Posterior vena cava (tissue), 2 donors: ENCODE measurements at regions of chr5 and their contacts with region 1.

Region 1: DNA sequence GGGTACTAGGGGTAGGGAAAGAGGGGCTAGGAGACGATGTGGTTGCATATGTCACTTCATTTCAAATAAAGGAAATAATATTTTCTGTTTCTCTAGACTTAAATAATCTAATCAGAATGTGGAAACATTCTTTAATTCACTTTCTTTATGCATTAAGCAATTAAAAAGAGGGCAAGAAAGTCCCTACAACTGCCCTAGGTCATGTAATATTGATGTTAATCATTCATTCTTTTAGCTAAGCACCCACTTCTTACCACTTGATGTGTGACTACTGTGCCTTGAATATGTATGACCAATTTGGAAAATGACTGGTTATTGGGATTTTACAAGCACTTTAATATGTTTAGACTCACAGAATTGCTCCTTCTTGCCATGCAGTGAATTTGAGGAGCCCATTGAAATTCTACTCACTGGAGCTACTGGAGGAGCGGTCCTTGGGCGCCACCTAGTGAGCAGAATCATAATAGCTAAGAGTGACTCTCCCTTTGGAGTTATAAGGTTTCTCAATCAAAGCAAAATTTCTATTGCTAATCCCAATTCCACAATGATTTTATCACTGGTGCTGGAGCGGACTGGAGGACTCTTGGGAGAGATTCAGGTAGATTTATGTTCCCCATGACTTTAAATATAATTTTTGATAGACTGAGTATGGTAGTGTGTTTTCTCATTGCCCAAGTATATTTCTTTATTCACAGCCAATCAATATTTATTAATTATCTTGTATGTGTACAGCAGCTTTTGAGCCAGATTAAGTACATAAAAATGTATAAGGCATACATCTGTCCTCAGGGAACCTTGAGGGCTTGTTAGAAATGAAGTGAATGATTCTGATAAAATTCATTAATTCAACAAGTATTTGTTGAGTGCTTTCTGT is 225.1 kb downstream of the ADGRV1 start:
- DNase-seq: peak; percentile 80

Region 2: GRCh38 chr5:90446961-90447360 is 336.7 kb before region 1 on chr5:
- intact Hi-C with region 1: loop called in 1 of 2 experiments (anchors 10 kb)
- DNase-seq: no peak

Region 3: DNA sequence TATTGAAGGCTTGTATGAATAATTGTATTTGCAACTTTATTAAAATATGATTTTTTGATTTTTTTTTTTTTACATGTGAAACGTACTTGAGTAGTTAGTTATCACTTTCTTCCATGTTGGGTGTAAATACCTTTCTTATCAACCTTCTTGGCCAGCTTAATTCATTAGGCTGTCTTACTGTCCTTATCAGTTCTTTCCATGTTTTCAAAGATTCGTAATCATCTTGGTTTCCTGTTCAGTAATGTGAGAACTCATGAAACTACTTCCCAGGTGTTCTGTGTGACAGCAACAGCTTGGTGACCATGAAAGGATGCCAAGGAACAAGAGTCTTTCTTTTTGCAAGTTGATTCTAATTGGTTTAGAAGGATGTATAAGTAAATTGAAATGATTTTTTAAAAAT is 125.1 kb before region 1 on chr5:
- intact Hi-C with region 1: no loop called
- DNase-seq: no peak